Endothelial cell of umbilical vein (primary cell): ENCODE measurements at regions of chr3 and their contacts with region 1.

Region 1: DNA sequence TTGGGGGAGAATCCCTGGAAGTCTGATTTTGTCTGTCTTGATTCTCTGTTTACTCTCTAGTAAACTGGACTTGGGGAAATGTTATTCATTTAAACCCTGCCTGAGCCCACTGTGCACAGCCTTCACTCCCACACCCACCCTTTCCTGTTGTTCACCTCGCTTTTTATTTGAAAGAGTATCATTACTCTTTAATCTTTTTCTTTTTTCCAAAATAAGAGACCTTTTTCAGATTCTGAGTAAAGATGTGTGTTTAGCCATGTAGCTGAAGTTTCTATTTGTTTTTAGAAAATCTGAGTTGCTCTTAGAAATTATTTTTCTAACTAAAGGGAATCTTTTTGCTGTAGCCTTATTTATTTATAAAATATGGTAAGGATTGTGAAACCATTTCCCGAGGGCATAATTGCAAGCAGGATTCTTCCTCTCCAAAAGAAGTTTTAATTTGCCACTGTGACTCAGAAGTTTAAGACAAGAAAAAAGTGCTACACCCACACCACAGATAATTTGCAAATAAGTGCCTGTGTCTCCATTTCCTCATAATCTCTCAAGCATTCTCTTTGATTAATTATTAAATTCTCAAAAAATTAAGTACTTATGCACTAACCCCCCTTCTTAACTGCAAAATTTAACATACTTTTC is 43.4 kb downstream of the RASA2 start:
- DNase-seq: peak; percentile 81
- H3K4me3 ChIP-seq: peak overlapping the region in 1 of 3 experiments; percentile 17
- H3K27ac ChIP-seq: peak overlapping the region; percentile 45
- H3K4me1 ChIP-seq: peaks cover 27% of the 10 kb centered on the region
- H3K27me3 ChIP-seq: no peaks in the 10 kb centered on the region
- CTCF ChIP-seq: no peak
- POLR2A ChIP-seq: no peak

Region 2: GRCh38 chr3:141184430-141184829 is 345.8 kb before region 1 on chr3:
- CTCF ChIA-PET with region 1: no interaction called
- POLR2A ChIA-PET with region 1: no interaction called
- dilution Hi-C with region 1: no loop called
- intact Hi-C with region 1: no loop called
- DNase-seq: no peak
- H3K4me3 ChIP-seq: no peak overlapping the region
- H3K27ac ChIP-seq: no peak overlapping the region
- H3K4me1 ChIP-seq: no peaks in the 10 kb centered on the region
- H3K27me3 ChIP-seq: no peaks in the 10 kb centered on the region
- CTCF ChIP-seq: no peak
- POLR2A ChIP-seq: no peak

Region 3: DNA sequence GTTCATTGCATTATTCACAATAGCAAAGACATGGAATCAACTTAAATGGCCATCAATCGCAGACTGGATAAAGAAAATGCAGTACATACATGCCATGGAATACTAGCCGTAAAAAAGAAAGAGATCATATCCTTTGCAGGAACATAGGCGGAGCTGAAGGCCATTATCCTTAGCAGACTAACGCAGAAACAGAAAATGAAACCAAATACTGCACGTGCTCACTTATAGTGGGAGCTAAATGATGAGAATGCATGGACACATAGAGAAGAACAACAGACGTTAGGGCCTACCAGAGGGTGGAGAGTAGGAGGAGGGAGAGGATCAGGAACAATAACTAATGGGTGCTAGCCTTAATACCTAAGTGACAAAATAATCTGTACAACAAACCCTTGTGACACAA is 14.4 kb after region 1 on chr3:
- CTCF ChIA-PET with region 1: no interaction called
- POLR2A ChIA-PET with region 1: no interaction called
- dilution Hi-C with region 1: no loop called
- intact Hi-C with region 1: loop called (anchors 1 kb)
- DNase-seq: peak; percentile 62
- H3K4me3 ChIP-seq: no peak overlapping the region
- H3K27ac ChIP-seq: no peak overlapping the region
- H3K4me1 ChIP-seq: peaks cover 5% of the 10 kb centered on the region
- H3K27me3 ChIP-seq: no peaks in the 10 kb centered on the region
- CTCF ChIP-seq: no peak
- POLR2A ChIP-seq: no peak